IMR-90 (cell line): ENCODE measurements at regions of chr11 and their contacts with region 1.

Region 1: DNA sequence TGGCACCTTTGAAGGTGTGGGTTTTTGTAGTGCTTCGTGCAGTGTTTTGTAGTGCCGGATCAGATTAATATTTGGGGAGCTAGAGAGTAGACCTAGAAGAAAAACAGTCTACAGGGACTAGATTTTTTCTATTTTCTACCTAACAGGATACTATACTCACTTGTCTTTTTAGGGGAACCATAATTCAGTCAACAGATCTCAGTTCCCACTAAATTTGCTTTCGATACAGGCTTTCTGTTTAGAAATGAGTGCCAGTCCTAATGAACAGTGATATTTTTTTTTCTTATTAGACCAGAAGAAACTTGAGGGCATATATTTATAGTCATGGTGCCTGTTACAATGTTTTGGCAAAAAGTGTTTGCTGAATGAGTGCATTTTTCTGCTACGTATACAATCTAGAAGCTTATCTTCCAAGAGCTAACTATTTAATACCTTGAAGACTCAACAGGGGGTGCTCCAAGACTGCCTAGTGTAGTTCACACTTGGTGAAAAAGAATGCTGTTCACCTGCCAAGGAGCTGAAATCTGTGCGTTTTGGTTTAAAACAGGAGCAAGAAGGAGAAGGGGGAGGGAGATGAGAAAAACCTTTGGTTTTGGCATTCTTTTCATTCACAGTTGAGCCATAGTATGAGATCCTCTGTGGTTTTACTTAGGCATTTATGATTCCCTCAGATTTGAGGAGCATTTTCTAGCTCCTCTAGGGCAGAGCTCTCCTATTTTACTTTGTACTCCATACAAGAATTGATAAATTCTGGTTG is 44.9 kb upstream of the VSTM5 start:
- DNase-seq: peak; percentile 82
- ATAC-seq: peak; percentile 98
- H3K4me3 ChIP-seq: no peak overlapping the region
- H3K27ac ChIP-seq: no peak overlapping the region
- H3K4me1 ChIP-seq: no peaks in the 10 kb centered on the region
- H3K27me3 ChIP-seq: peaks cover 10% of the 10 kb centered on the region
- CTCF ChIP-seq: peak; percentile 88
- POLR2A ChIP-seq: no peak
- RAD21 ChIP-seq: peak; percentile 95

Region 2: DNA sequence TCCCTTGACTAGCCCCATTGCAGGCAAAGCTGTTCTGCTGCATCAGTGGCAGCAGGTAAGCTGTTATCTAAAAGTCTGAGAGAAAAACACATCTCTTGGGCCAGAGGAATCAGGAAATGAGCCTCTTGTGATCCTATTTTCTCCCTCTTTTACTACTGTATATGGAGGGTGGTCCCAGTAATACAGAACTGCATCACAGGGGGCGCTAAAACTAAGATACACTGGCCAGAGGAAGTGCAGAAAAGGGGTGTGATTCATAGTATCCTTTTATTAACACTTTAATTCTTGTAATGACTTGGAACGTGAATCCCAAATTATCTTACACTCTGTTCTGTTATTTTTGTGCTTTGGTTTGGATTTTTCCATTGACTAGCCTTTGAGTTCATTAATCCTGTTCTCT is 120.0 kb before region 1 on chr11:
- CTCF ChIA-PET with region 1: no interaction called
- POLR2A ChIA-PET with region 1: no interaction called
- dilution Hi-C with region 1: no loop called
- in situ Hi-C with region 1: no loop called
- intact Hi-C with region 1: no loop called
- DNase-seq: no peak
- ATAC-seq: no peak
- H3K4me3 ChIP-seq: no peak overlapping the region
- H3K27ac ChIP-seq: no peak overlapping the region
- H3K4me1 ChIP-seq: no peaks in the 10 kb centered on the region
- H3K27me3 ChIP-seq: no peaks in the 10 kb centered on the region
- CTCF ChIP-seq: peak; percentile 23; the same call in 1 of the 2 replicates
- POLR2A ChIP-seq: no peak
- RAD21 ChIP-seq: no peak

Region 3: DNA sequence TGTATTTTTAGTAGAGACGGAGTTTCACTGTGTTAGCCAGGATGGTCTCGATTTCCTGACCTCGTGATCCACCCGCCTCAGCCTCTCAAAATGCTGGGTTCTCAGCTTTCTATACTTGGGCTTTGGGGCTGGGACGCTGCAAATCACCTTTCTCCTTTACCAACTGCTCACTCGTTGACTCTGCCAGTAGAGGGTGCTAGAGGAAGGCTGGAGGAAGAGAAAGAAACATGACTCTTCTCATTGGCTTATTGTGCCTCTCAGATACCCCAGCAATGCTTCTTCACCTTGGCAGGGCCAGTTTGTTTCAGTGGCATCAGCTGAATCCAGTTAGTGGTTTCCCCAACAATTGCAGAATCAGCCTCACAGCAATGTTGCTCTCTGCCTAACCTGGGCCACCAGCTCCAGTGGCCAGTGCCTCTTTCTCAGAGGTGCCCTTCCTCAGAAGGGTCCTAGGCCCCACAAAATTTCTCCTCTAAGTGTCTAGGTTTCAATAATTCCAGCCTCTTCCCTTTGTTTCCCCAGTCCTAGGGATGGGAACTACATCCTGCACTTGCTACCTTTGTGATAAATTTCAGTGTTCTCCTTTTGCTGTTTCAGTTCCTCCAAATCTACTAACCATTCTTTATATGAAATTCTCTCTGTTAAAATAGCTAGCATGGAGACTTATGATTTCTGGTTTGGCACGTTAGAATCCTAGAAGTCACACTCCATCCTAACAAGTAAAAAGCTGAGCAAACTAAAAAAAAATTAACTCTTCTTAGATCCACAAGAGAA is 26.6 kb after region 1 on chr11:
- CTCF ChIA-PET with region 1: interaction called, 13 read pairs
- POLR2A ChIA-PET with region 1: no interaction called
- dilution Hi-C with region 1: no loop called
- in situ Hi-C with region 1: no loop called
- intact Hi-C with region 1: no loop called
- DNase-seq: peak; percentile 72
- ATAC-seq: peak; percentile 96
- H3K4me3 ChIP-seq: no peak overlapping the region
- H3K27ac ChIP-seq: no peak overlapping the region
- H3K4me1 ChIP-seq: no peaks in the 10 kb centered on the region
- H3K27me3 ChIP-seq: peaks cover 7% of the 10 kb centered on the region
- CTCF ChIP-seq: peak; percentile 83
- POLR2A ChIP-seq: no peak
- RAD21 ChIP-seq: peak; percentile 92

Region 4: GRCh38 chr11:94183886-94184264 is 288.6 kb after region 1 on chr11:
- CTCF ChIA-PET with region 1: interaction called, 17 read pairs
- POLR2A ChIA-PET with region 1: no interaction called
- dilution Hi-C with region 1: no loop called
- in situ Hi-C with region 1: no loop called
- intact Hi-C with region 1: no loop called
- DNase-seq: peak; percentile 67
- ATAC-seq: peak; percentile 22; the same call in 1 of the 2 replicates
- H3K4me3 ChIP-seq: no peak overlapping the region
- H3K27ac ChIP-seq: no peak overlapping the region
- H3K4me1 ChIP-seq: peaks cover 26% of the 10 kb centered on the region
- H3K27me3 ChIP-seq: no peaks in the 10 kb centered on the region
- CTCF ChIP-seq: peak; percentile 67
- POLR2A ChIP-seq: no peak
- RAD21 ChIP-seq: peak; percentile 71

Region 5: GRCh38 chr11:94504689-94505293 is 609.5 kb after region 1 on chr11:
- CTCF ChIA-PET with region 1: interaction called, 18 read pairs
- POLR2A ChIA-PET with region 1: no interaction called
- dilution Hi-C with region 1: no loop called
- in situ Hi-C with region 1: loop called (anchors 10 kb)
- intact Hi-C with region 1: loop called (anchors 1 kb)
- DNase-seq: peak; percentile 68
- ATAC-seq: peak; percentile 67
- H3K4me3 ChIP-seq: no peak overlapping the region
- H3K27ac ChIP-seq: no peak overlapping the region
- H3K4me1 ChIP-seq: no peaks in the 10 kb centered on the region
- H3K27me3 ChIP-seq: no peaks in the 10 kb centered on the region; the same call in 1 of the 2 replicates
- CTCF ChIP-seq: peak; percentile 75
- POLR2A ChIP-seq: no peak
- RAD21 ChIP-seq: peak; percentile 78

Region 6: GRCh38 chr11:94973099-94973968 is 1078.0 kb after region 1 on chr11 and contains the starts of genes CWC15 and KDM4D:
- CTCF ChIA-PET with region 1: no interaction called
- POLR2A ChIA-PET with region 1: no interaction called
- dilution Hi-C with region 1: no loop called
- in situ Hi-C with region 1: no loop called
- intact Hi-C with region 1: loop called (anchors 5 kb)
- DNase-seq: peak; percentile 90
- ATAC-seq: peak; percentile 100
- H3K4me3 ChIP-seq: peak within 1 kb of the TSS; percentile 95
- H3K27ac ChIP-seq: peak within 1 kb of the TSS; percentile 95
- H3K4me1 ChIP-seq: no peaks in the 10 kb centered on the region
- H3K27me3 ChIP-seq: no peaks in the 10 kb centered on the region
- CTCF ChIP-seq: no peak
- POLR2A ChIP-seq: peak; percentile 78
- RAD21 ChIP-seq: no peak; the same call in 1 of the 2 replicates
- total RNA-seq, gene CWC15: 48.6 and 70.0 TPM in 2 replicates
- total RNA-seq, gene KDM4D: 0.90 and 1.1 TPM in 2 replicates